ENCODE measurements at regions of chr12 and their contacts with region 1.

Region 1: GRCh38 chr12:64186789-64187188 is 35.3 kb downstream of the KICS2 start:
- DNase-seq: no peak
- ATAC-seq: no peak
- H3K4me3 ChIP-seq: no peak overlapping the region
- H3K4me3 Mint-ChIP-seq: no peak overlapping the region
- H3K27ac ChIP-seq: no peak overlapping the region
- H3K27ac Mint-ChIP-seq: no peak overlapping the region
- H3K4me1 ChIP-seq: no peaks in the 10 kb centered on the region
- H3K4me1 Mint-ChIP-seq: no peaks in the 10 kb centered on the region
- H3K27me3 ChIP-seq: no peaks in the 10 kb centered on the region
- H3K27me3 Mint-ChIP-seq: no peaks in the 10 kb centered on the region
- CTCF ChIP-seq: no peak

Region 2: GRCh38 chr12:64171715-64172114 is 15.1 kb before region 1 on chr12:
- CTCF ChIA-PET with region 1: no interaction called
- POLR2A ChIA-PET with region 1: no interaction called
- intact Hi-C with region 1: no loop called
- DNase-seq: no peak
- ATAC-seq: no peak
- H3K4me3 ChIP-seq: no peak overlapping the region
- H3K4me3 Mint-ChIP-seq: no peak overlapping the region
- H3K27ac ChIP-seq: no peak overlapping the region
- H3K27ac Mint-ChIP-seq: no peak overlapping the region
- H3K4me1 ChIP-seq: no peaks in the 10 kb centered on the region
- H3K4me1 Mint-ChIP-seq: no peaks in the 10 kb centered on the region
- H3K27me3 ChIP-seq: no peaks in the 10 kb centered on the region
- H3K27me3 Mint-ChIP-seq: no peaks in the 10 kb centered on the region
- CTCF ChIP-seq: no peak

Region 3: DNA sequence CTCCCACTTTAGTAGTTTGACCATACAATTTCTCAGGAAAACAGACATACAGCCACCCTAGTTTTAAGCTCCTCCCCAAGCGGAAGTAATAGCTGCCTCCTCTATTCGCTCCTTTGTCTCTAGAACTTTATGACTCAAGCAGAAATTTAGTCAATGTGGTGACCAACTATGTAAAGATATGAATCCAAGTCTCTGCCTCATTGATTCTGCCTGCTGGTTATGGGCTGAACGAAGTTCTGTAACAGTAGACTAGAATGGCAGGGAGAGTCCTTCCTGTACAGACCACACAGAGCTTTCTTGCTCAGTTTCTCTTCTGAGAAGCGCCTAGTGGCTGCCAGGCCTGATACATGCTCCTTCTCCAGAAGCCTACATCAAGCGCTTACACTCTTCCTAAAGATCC is 16.2 kb after region 1 on chr12:
- CTCF ChIA-PET with region 1: no interaction called
- POLR2A ChIA-PET with region 1: no interaction called
- intact Hi-C with region 1: loop called in 1 of 2 experiments (anchors 2 kb)
- DNase-seq: no peak
- ATAC-seq: no peak
- H3K4me3 ChIP-seq: no peak overlapping the region
- H3K4me3 Mint-ChIP-seq: no peak overlapping the region
- H3K27ac ChIP-seq: no peak overlapping the region
- H3K27ac Mint-ChIP-seq: no peak overlapping the region
- H3K4me1 ChIP-seq: no peaks in the 10 kb centered on the region
- H3K4me1 Mint-ChIP-seq: no peaks in the 10 kb centered on the region
- H3K27me3 ChIP-seq: no peaks in the 10 kb centered on the region
- H3K27me3 Mint-ChIP-seq: no peaks in the 10 kb centered on the region
- CTCF ChIP-seq: no peak

Region 4: GRCh38 chr12:64222009-64222765 is 35.4 kb after region 1 on chr12 and contains the start of gene KICS2:
- CTCF ChIA-PET with region 1: no interaction called
- POLR2A ChIA-PET with region 1: no interaction called
- intact Hi-C with region 1: no loop called
- DNase-seq: peak; percentile 82 to 97 (median 90)
- ATAC-seq: peak; percentile 82
- H3K4me3 ChIP-seq: peak within 1 kb of the TSS; percentile 67 to 94
- H3K4me3 Mint-ChIP-seq: peak within 1 kb of the TSS; percentile 93
- H3K27ac ChIP-seq: peak within 1 kb of the TSS; percentile 95 to 97
- H3K27ac Mint-ChIP-seq: peak within 1 kb of the TSS; percentile 98
- H3K4me1 ChIP-seq: peaks cover 12% of the 10 kb centered on the region
- H3K4me1 Mint-ChIP-seq: peaks cover 39% of the 10 kb centered on the region
- H3K27me3 ChIP-seq: no peaks in the 10 kb centered on the region
- H3K27me3 Mint-ChIP-seq: peaks cover 8% of the 10 kb centered on the region
- CTCF ChIP-seq: no peak
- total RNA-seq, gene KICS2: 13.9 to 15.5 TPM